ENCODE measurements at regions of chr7 and their contacts with region 1.

Region 1: DNA sequence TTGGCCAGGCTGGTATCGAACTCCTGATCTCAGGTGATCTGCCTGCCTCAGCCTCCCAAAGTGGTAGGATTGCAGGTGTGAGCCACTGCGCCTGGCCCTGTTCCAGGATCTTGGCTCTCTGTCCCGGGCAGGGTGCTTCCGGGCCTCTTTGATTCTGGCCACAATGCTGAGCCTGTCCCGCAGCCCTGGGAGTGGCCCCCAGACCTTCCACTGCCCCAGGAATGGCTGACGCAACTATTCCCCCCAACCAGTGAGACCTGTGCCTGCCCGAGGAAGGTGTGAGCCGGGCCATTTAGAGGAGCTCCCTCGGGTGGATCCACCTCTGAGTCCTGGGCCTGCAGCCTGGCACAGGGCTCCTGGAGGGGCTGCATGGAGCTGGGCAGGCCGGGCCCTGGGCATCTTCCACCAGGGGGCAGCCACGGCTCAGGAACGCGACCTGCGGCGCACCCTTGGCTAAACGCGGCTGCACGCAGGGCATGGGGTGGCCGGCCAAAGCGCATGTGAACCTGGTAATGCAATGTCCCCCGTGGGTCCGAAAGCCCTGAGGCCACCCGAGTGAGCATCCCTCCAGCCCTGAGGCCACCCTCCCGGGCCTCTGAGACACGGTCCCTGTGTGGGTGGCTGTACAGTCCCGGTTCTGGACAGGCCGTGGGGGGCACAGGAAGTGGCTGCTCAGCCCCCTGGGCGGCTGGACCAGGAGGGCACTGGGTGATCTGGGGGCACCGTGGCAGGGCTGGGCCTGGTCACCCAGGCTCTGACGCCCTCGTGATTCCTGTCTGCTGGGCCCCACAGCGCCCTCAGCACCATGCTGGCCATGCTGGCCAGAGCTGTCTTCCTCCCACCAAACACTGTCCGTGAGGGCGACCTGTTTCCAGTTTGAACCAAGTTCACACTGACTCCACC is 24.8 kb downstream of the GRIFIN start:
- DNase-seq: peak; percentile 60
- H3K4me3 Mint-ChIP-seq: peak overlapping the region; percentile 33
- H3K27ac Mint-ChIP-seq: no peak overlapping the region
- H3K4me1 Mint-ChIP-seq: peaks cover 3% of the 10 kb centered on the region
- H3K27me3 Mint-ChIP-seq: peaks cover 10% of the 10 kb centered on the region

Region 2: GRCh38 chr7:2471396-2471795 is 20.0 kb after region 1 on chr7:
- intact Hi-C with region 1: loop called (anchors 1 kb)
- DNase-seq: no peak
- H3K4me3 Mint-ChIP-seq: no peak overlapping the region
- H3K27ac Mint-ChIP-seq: no peak overlapping the region
- H3K4me1 Mint-ChIP-seq: no peaks in the 10 kb centered on the region
- H3K27me3 Mint-ChIP-seq: peaks cover 11% of the 10 kb centered on the region

Region 3: DNA sequence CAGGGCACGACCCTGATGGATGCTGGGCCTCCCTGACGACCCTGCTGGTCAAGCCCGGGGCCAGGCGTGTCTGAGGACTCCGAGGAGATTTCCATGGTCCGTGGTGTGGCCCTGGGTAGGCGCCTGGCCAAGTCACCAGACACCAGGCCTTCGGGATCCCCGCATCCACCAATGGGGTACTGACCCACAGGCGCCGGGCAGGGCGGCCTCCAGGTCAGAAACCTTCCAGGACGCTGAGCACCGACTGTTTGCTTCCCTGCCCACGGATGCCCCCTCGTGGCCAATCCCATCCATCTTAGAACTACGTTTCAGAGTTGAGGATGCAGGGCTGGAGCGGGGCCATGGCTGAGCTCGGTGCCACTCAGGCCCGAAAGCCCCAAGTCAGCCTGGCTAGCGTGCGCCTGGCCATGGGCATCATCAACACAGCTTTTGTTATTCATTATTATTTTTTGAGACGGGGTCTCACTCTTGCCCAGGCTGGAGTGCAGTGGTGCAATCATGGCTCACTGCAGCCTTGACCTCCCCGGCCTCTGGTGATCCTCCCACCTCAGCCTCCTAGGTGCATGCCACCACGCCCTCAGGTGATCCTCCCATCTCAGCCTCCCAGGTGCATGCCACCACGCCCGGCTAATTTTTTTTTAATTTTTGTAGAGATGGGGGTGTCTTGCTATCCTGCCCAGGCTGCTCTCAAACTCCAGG is 229.5 kb after region 1 on chr7:
- intact Hi-C with region 1: loop called (anchors 10 kb)
- DNase-seq: peak; percentile 30
- H3K4me3 Mint-ChIP-seq: no peak overlapping the region
- H3K27ac Mint-ChIP-seq: no peak overlapping the region
- H3K4me1 Mint-ChIP-seq: no peaks in the 10 kb centered on the region
- H3K27me3 Mint-ChIP-seq: peaks cover 6% of the 10 kb centered on the region